Left cardiac atrium (tissue), 4 donors: ENCODE measurements at regions of chr3 and their contacts with region 1.

Region 1: GRCh38 chr3:38479431-38480092 is 16.6 kb upstream of the EXOG start:
- DNase-seq: peak; percentile 65
- ATAC-seq: peak; percentile 86 to 88

Region 2: GRCh38 chr3:38346587-38347410 is 132.8 kb before region 1 on chr3 and contains the start of gene XYLB:
- intact Hi-C with region 1: loop called (anchors 2 to 5 kb)
- DNase-seq: peak; percentile 92
- ATAC-seq: peak; percentile 99
- total RNA-seq, gene XYLB: 1.6 TPM